Breast epithelium (tissue), 4 donors: ENCODE measurements at regions of chr5 and their contacts with region 1.

Region 1: GRCh38 chr5:10418654-10419345 is 22.9 kb upstream of the ROPN1L start:
- DNase-seq: no peak
- H3K4me3 ChIP-seq: no peak overlapping the region
- H3K27ac ChIP-seq: no peak overlapping the region
- H3K4me1 ChIP-seq: no peaks in the 10 kb centered on the region
- H3K27me3 ChIP-seq: no peaks in the 10 kb centered on the region
- CTCF ChIP-seq: no peak
- POLR2A ChIP-seq: no peak

Region 2: DNA sequence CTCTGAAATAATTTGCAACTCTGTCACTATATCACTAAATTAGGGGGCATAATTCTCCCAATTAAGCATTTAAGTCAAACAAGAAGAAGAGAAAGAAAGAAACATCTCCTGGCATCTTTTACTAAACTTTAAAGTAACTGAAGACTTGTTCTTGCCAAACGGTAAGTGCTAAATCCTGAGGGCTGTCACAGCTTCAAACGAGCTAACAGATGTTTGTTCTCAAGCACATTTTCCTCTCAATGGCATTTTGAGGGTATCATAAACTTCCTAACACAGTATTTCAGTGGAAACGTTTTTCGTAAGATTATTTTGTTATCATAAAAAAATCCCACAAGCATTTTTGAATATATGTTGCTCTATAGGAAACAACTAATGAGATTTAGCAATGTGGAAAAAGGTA is 619.2 kb before region 1 on chr5:
- intact Hi-C with region 1: no loop called
- DNase-seq: no peak
- H3K4me3 ChIP-seq: no peak overlapping the region
- H3K27ac ChIP-seq: no peak overlapping the region
- H3K4me1 ChIP-seq: no peaks in the 10 kb centered on the region
- H3K27me3 ChIP-seq: no peaks in the 10 kb centered on the region
- CTCF ChIP-seq: no peak
- POLR2A ChIP-seq: no peak

Region 3: GRCh38 chr5:10372726-10373709 is 45.8 kb before region 1 on chr5:
- intact Hi-C with region 1: loop called (anchors 2 kb)
- DNase-seq: no peak
- H3K4me3 ChIP-seq: no peak overlapping the region
- H3K27ac ChIP-seq: no peak overlapping the region
- H3K4me1 ChIP-seq: peaks cover 3 to 4% of the 10 kb centered on the region in 2 donors
- H3K27me3 ChIP-seq: no peaks in the 10 kb centered on the region
- CTCF ChIP-seq: no peak
- POLR2A ChIP-seq: no peak

Region 4: GRCh38 chr5:11468334-11469039 is 1049.7 kb after region 1 on chr5:
- intact Hi-C with region 1: no loop called
- DNase-seq: no peak
- H3K4me3 ChIP-seq: no peak overlapping the region
- H3K27ac ChIP-seq: no peak overlapping the region
- H3K4me1 ChIP-seq: no peaks in the 10 kb centered on the region
- H3K27me3 ChIP-seq: no peaks in the 10 kb centered on the region
- CTCF ChIP-seq: no peak
- POLR2A ChIP-seq: no peak